Ovary (tissue), 10 donors: ENCODE measurements at regions of chr10 and their contacts with region 1.

Region 1: GRCh38 chr10:13705526-13706174 is 118.9 kb downstream of the PRPF18 start:
- DNase-seq: peak in 1 of 5 donors; percentile 19
- H3K4me3 ChIP-seq: no peak overlapping the region
- H3K27ac ChIP-seq: no peak overlapping the region
- H3K4me1 ChIP-seq: peaks cover 8% of the 10 kb centered on the region
- H3K27me3 ChIP-seq: no peaks in the 10 kb centered on the region
- CTCF ChIP-seq: no peak
- EP300 ChIP-seq: no peak
- POLR2A ChIP-seq: no peak

Region 2: DNA sequence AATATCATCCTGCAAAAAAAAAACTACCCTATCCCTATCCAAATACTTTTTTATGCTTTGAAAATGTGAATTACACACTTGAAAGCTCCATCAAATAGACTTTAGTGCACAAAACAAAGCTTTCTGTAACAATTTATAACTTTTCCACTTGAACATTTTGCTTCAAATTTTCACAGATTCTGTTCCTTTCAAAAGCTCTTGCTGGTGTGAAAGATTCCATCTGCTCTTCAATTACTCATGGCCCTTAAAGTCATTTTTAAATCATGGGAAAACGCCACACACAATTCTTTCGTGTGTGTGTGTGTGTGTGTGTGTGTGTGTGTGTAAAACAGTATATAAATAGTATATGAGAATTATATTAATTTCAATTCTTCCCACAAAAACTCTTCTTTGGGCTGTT is 48.6 kb after region 1 on chr10:
- intact Hi-C with region 1: loop called in 1 of 4 experiments (anchors 2 kb)
- DNase-seq: no peak
- H3K4me3 ChIP-seq: no peak overlapping the region
- H3K27ac ChIP-seq: no peak overlapping the region
- H3K4me1 ChIP-seq: peaks cover 4% of the 10 kb centered on the region
- H3K27me3 ChIP-seq: no peaks in the 10 kb centered on the region
- CTCF ChIP-seq: no peak
- EP300 ChIP-seq: no peak
- POLR2A ChIP-seq: no peak